KBM-7 (cell line): ENCODE measurements at regions of chr1 and their contacts with region 1.

Region 1: GRCh38 chr1:153488731-153489130 is 28.3 kb upstream of the S100A7 start:
- DNase-seq: no peak

Region 2: GRCh38 chr1:153365303-153366095 is 123.2 kb before region 1 on chr1:
- in situ Hi-C with region 1: loop called (anchors 10 kb)
- DNase-seq: no peak

Region 3: GRCh38 chr1:153545067-153546055 is 56.6 kb after region 1 on chr1 and contains the start of gene S100A4:
- in situ Hi-C with region 1: no loop called
- DNase-seq: peak; percentile 98